ENCODE measurements at regions of chr4 and their contacts with region 1.

Region 1: DNA sequence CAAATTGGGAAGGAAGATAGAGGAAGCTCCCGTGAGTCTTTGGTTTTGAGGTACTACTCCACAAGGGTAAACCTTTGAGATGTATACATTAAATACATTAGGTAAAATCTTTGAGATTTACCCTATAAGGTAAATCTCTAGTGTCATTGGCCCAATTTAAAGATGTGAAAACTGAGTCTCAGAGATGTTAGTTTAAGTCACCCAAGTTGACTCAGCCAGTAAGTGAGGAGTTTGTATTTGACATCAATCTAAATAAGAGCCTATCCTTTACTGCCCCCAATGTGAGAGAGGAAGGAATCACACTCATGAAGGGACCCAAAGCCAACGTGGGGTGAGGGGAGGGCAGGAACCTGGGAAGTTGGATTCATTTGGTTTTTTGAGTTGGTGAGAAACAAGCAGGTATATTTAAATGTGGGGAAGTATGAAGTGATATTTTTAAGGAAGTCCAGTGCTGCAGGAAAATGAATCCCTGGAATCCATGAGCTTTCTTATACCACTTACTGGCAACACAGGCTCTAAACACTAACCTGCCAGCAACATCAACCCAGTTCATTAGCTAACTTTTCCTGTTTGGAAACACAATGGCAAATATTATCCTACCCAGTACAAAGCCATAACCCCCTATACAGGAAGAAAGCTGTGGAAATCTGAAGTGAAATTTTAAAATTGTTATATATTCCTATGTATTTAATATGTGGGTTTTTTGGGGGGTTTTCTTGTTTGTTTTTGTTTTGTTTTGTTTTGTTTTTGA is 55.3 kb downstream of the PALLD start:
- DNase-seq: peak; percentile 15 to 43 (median 26)
- H3K4me3 ChIP-seq: no peak overlapping the region
- H3K4me3 Mint-ChIP-seq: no peak overlapping the region
- H3K27ac ChIP-seq: no peak overlapping the region
- H3K27ac Mint-ChIP-seq: peak overlapping the region in 1 of 7 donors; percentile 3
- H3K4me1 ChIP-seq: no peaks in the 10 kb centered on the region
- H3K4me1 Mint-ChIP-seq: peaks cover 3% of the 10 kb centered on the region
- H3K27me3 ChIP-seq: no peaks in the 10 kb centered on the region
- H3K27me3 Mint-ChIP-seq: peaks cover 0 to 3% (median 0%) of the 10 kb centered on the region in 3 donors
- CTCF ChIP-seq: peak; percentile 41

Region 2: GRCh38 chr4:168183717-168184608 is 368.2 kb before region 1 on chr4:
- intact Hi-C with region 1: loop called in 1 of 2 experiments (anchors 10 kb)
- DNase-seq: no peak
- H3K4me3 ChIP-seq: no peak overlapping the region
- H3K4me3 Mint-ChIP-seq: no peak overlapping the region
- H3K27ac ChIP-seq: no peak overlapping the region
- H3K27ac Mint-ChIP-seq: no peak overlapping the region
- H3K4me1 ChIP-seq: peaks cover 0 to 3% of the 10 kb centered on the region in 2 donors
- H3K4me1 Mint-ChIP-seq: peaks cover 10% of the 10 kb centered on the region
- H3K27me3 ChIP-seq: no peaks in the 10 kb centered on the region
- H3K27me3 Mint-ChIP-seq: peaks cover 0 to 1% (median 0%) of the 10 kb centered on the region in 3 donors
- CTCF ChIP-seq: peak; percentile 62

Region 3: GRCh38 chr4:168248176-168248710 is 303.9 kb before region 1 on chr4:
- intact Hi-C with region 1: no loop called
- DNase-seq: no peak
- H3K4me3 ChIP-seq: no peak overlapping the region
- H3K4me3 Mint-ChIP-seq: no peak overlapping the region
- H3K27ac ChIP-seq: no peak overlapping the region
- H3K27ac Mint-ChIP-seq: no peak overlapping the region
- H3K4me1 ChIP-seq: no peaks in the 10 kb centered on the region
- H3K4me1 Mint-ChIP-seq: no peaks in the 10 kb centered on the region
- H3K27me3 ChIP-seq: no peaks in the 10 kb centered on the region
- H3K27me3 Mint-ChIP-seq: no peaks in the 10 kb centered on the region
- CTCF ChIP-seq: no peak

Measured in CD14-positive monocyte (primary cell).